GM13977 (cell line): ENCODE measurements at regions of chr22 and their contacts with region 1.

Region 1: GRCh38 chr22:34111210-34111824 is 191.0 kb upstream of the LARGE1 start:
- DNase-seq: peak; percentile 48
- CTCF ChIP-seq: peak; percentile 71

Region 2: GRCh38 chr22:33302049-33302545 is 809.2 kb before region 1 on chr22:
- in situ Hi-C with region 1: loop called (anchors 25 kb)
- DNase-seq: peak; percentile 71
- CTCF ChIP-seq: peak; percentile 99

Region 3: GRCh38 chr22:33920927-33921524 is 190.3 kb before region 1 on chr22:
- in situ Hi-C with region 1: no loop called
- DNase-seq: peak; percentile 95
- CTCF ChIP-seq: no peak

Region 4: GRCh38 chr22:34160140-34160783 is 48.9 kb after region 1 on chr22:
- in situ Hi-C with region 1: no loop called
- DNase-seq: no peak
- CTCF ChIP-seq: no peak